IMR-90 (cell line): ENCODE measurements at regions of chr20 and their contacts with region 1.

Region 1: DNA sequence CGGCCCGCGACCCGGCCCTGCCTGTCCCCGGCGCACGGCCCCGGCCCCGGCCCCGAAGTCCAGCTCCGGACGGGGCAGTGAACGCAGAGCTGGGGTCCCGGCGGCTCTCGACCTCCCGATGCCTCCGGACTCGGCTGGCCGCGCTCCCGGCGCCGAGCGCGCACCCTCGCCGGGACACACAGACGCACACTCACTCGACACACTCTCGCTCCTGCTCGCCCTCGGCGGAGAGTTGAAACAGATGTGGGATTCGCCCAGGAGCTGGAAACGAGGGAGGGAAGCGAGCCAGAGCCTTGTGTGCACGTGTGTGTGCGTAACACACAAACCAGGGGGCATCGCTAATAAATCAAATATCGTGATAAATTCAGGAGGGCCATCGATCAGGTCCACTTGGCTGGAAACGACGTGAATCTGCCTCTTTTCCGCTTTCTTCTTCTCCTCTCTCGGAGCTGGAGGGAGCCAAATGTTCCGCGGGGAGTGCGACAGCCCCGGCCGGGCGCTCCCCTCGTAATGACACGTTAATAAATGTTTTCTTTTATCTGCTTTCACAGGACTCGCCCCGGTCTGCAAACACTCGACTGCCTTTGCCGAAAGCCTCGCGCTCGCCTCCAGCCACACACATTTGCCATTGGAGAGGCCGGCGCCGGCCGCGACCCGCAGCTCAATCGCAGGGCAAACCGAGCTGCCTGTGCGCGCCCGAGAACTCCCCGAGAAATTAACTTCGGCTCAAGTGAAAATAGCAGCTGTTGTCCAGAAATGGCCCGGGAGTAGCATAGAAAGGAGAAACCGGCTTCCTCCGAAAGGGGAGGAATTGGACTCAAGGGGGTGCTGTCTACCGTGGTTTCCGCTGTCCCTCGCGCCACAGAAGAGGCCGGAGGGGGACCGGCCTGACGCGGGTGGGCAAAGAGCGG is 828 bp upstream of the SULF2 start:
- DNase-seq: peak; percentile 71
- ATAC-seq: peak; percentile 72
- H3K4me3 ChIP-seq: peak overlapping the region; percentile 37
- H3K27ac ChIP-seq: peak overlapping the region; percentile 21; the same call in 1 of the 2 replicates
- H3K4me1 ChIP-seq: peaks cover 4% of the 10 kb centered on the region; the same call in 1 of the 2 replicates
- H3K27me3 ChIP-seq: peaks cover 54% of the 10 kb centered on the region
- CTCF ChIP-seq: peak; percentile 58
- POLR2A ChIP-seq: no peak
- RAD21 ChIP-seq: peak; percentile 70

Region 2: DNA sequence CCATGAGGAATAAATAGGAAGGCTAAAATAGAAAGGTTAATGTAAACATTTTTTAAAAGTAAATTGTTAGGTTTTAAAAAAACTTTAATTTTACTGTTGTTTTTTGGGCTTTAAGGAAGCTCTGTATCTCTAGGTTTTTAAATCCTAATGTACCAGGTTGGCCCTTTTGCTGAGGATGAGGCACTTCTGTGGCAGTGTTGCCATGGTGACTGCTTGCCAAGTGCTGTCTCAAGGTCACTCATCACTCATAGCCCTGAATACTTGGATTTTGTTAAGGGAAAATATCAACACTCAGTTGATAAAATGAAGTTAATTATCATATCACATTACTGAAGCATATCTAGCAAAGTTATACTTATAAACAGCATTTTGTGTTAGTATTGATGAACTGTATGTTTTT is 234.3 kb before region 1 on chr20:
- CTCF ChIA-PET with region 1: no interaction called
- POLR2A ChIA-PET with region 1: no interaction called
- dilution Hi-C with region 1: no loop called
- in situ Hi-C with region 1: no loop called
- intact Hi-C with region 1: no loop called
- DNase-seq: no peak
- ATAC-seq: no peak
- H3K4me3 ChIP-seq: no peak overlapping the region
- H3K27ac ChIP-seq: no peak overlapping the region
- H3K4me1 ChIP-seq: no peaks in the 10 kb centered on the region
- H3K27me3 ChIP-seq: no peaks in the 10 kb centered on the region
- CTCF ChIP-seq: no peak
- POLR2A ChIP-seq: no peak
- RAD21 ChIP-seq: no peak

Region 3: DNA sequence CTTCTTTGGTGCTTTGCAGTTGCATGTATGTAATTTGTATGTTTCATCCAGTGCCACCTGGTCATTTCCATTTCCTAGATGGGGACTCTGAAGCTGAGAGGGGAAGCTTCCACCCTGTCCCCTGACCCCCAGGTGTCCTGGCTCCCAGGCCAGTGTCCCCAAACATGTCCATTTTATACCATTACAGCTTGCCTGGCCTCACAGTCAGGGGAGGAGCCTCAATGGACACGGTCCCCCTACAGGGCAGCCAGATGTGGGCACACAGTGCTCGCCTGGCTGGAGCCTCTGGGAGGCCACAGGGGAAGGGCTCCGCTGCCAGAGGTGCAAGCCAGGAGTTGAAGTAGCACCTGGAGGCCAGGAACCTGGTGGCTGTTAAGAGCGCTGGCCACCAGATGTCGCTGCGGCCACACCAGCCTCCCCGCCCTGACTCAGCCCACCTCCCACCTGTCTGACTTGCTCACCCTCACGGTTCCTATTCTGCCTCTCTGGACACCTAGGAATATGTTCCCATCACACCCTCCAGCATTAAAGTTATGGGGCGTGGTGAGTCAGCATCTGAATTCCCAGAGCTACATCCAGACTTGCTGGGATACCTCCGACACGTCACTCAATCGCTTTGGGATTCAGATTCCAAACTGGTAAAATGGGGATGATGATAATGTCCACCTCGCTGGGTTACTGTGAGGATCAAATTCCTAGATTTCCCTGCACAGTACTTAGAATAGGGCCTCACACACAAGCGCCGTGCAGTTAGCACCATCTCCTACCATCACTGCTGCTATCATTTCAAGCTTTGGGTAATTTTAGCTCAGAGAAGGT is 108.3 kb before region 1 on chr20:
- CTCF ChIA-PET with region 1: no interaction called
- POLR2A ChIA-PET with region 1: no interaction called
- dilution Hi-C with region 1: no loop called
- in situ Hi-C with region 1: no loop called
- intact Hi-C with region 1: loop called (anchors 5 kb)
- DNase-seq: peak; percentile 16
- ATAC-seq: peak; percentile 42; the same call in 1 of the 2 replicates
- H3K4me3 ChIP-seq: no peak overlapping the region
- H3K27ac ChIP-seq: no peak overlapping the region
- H3K4me1 ChIP-seq: no peaks in the 10 kb centered on the region; the same call in 1 of the 2 replicates
- H3K27me3 ChIP-seq: peaks cover 3% of the 10 kb centered on the region; the same call in 1 of the 2 replicates
- CTCF ChIP-seq: peak; percentile 65
- POLR2A ChIP-seq: no peak
- RAD21 ChIP-seq: peak; percentile 68

Region 4: GRCh38 chr20:48308882-48309281 is 522.8 kb after region 1 on chr20:
- CTCF ChIA-PET with region 1: no interaction called
- POLR2A ChIA-PET with region 1: interaction called, 10 read pairs
- dilution Hi-C with region 1: no loop called
- in situ Hi-C with region 1: no loop called
- intact Hi-C with region 1: no loop called
- DNase-seq: no peak
- ATAC-seq: no peak
- H3K4me3 ChIP-seq: no peak overlapping the region
- H3K27ac ChIP-seq: no peak overlapping the region
- H3K4me1 ChIP-seq: no peaks in the 10 kb centered on the region
- H3K27me3 ChIP-seq: peaks cover 30% of the 10 kb centered on the region
- CTCF ChIP-seq: no peak
- POLR2A ChIP-seq: no peak
- RAD21 ChIP-seq: no peak